Ascending aorta (tissue), 2 donors: ENCODE measurements at regions of chr12 and their contacts with region 1.

Region 1: DNA sequence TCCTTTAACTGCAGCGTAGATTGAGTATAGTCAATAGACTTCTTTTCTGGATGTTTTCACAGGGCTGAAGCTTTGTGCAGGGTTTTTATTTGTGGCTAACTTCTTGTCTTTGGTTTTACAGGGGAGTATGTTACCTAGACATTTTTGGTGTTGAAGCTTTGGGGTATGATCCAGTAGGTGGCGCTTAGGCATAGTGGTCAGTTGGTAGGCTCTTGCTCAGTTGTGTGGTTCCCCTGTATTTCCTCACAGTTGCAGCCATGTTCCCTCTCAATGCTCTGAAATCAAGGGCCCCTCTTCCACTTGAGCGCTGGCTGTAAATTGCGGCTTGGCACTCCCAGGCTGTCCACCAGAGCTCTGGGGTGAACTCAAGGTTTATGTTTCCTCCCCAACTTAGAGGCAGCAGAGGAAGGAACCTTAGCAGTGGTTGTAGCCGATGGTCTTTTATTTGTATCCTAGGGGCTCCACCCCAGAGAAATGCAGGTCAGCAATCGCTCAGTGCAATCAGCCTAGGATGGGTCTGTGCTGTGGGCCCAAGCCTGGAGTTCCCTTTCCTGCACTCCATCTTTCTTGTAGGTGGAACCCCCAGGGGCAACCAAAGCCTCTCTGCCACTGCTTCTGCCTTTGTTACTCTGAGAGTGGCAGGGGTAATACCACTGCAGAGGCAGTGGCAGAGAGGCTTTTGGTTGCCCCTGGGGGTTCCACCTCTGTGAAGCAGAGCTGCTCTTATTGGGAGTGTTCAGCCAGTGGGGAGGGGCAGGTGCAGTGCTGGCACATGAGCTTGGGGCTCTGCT is 55.1 kb downstream of the CMAS start:
- DNase-seq: no peak
- H3K4me3 ChIP-seq: no peak overlapping the region
- H3K27ac ChIP-seq: no peak overlapping the region
- H3K4me1 ChIP-seq: no peaks in the 10 kb centered on the region
- H3K27me3 ChIP-seq: no peaks in the 10 kb centered on the region
- CTCF ChIP-seq: peak; percentile 16 to 50 (median 36)

Region 2: GRCh38 chr12:20740972-20741371 is 1360.2 kb before region 1 on chr12:
- intact Hi-C with region 1: loop called (anchors 10 kb)
- DNase-seq: no peak
- H3K4me3 ChIP-seq: no peak overlapping the region
- H3K27ac ChIP-seq: no peak overlapping the region
- H3K4me1 ChIP-seq: no peaks in the 10 kb centered on the region
- H3K27me3 ChIP-seq: no peaks in the 10 kb centered on the region
- CTCF ChIP-seq: no peak

Region 3: GRCh38 chr12:21809100-21809499 is 292.1 kb before region 1 on chr12:
- intact Hi-C with region 1: no loop called
- DNase-seq: no peak
- H3K4me3 ChIP-seq: no peak overlapping the region
- H3K27ac ChIP-seq: no peak overlapping the region
- H3K4me1 ChIP-seq: no peaks in the 10 kb centered on the region
- H3K27me3 ChIP-seq: no peaks in the 10 kb centered on the region
- CTCF ChIP-seq: no peak

Region 4: DNA sequence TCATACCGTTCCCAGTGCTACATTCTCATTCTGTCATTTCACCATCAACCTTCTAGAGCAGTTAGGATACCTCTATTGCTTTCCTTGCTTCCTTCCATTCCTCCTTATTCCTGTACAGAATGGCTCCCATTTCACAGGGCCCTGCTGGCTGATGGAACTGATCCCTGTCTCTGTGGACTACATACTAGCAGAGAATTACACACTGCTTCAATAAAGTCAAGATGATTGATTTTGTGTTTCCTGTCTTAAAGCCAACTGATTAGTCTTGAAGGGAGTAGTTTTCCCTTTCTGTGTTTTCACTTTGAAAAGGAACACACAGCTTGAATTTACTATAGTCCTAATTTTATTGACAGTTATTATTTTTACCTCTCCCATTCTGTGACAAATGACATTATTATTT is 103.2 kb after region 1 on chr12:
- intact Hi-C with region 1: no loop called
- DNase-seq: no peak
- H3K4me3 ChIP-seq: no peak overlapping the region
- H3K27ac ChIP-seq: no peak overlapping the region
- H3K4me1 ChIP-seq: no peaks in the 10 kb centered on the region
- H3K27me3 ChIP-seq: no peaks in the 10 kb centered on the region
- CTCF ChIP-seq: no peak

Region 5: DNA sequence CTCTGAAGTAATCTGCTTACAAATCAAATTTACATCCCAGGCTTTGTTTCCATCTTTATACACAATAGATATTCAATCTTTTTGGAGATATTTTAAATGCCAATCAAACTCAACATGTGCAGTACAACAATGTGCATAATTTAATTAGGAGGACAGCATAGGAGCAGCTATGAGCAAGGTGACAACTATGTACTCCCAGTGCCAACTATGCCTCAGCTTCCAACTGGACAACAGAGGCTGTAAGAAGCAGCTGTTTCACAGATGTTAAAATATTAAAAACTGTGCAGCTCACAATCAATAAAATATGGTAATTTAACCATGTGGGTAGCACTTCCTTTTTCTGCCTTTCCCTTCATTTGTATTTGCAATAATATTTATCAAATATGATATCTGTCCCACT is 133.4 kb after region 1 on chr12:
- intact Hi-C with region 1: no loop called
- DNase-seq: no peak
- H3K4me3 ChIP-seq: no peak overlapping the region
- H3K27ac ChIP-seq: no peak overlapping the region
- H3K4me1 ChIP-seq: no peaks in the 10 kb centered on the region
- H3K27me3 ChIP-seq: no peaks in the 10 kb centered on the region
- CTCF ChIP-seq: no peak

Region 6: DNA sequence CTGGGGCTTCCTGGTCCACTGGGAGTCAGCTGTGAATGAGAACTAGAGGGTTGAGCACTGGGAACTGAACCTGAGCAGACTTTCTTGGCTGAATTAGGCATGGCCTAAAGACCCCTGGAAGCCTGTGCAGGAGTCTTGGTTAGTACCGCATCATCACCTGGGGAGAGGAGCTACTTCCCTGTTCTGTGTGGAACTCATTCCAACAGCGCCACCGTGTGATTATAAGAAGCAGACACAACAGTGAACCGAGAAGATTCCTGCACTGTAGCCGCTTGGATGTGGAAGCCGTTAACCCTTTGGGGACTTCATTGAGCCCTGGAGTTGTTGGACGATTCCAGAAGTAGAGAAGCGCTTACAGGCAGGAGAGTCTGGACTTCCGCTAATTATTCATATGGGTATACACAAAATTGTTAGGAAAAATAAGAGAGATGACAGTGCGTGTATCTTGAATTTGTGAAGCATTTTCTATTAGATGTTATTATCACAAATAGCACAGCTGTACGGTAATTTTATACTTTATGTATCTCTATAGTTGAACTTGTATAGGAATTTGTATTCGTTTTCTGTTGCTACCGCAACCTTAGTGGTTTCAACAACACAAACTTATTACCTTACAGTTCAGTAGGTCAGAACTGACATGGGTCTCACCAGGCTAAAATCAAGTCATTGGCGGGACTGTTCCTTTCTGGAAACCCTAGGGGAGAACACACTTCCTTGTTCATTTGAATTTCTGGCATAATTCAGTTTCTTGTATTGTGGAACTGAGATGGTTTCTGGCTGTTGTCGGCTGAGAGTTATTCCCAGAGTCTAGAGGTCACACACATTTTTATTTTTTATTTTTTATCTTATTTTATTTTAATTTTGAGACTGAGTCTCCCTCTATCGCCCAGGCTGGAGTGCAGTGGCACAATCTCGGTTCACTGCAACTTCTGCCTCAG is 342.5 kb after region 1 on chr12:
- intact Hi-C with region 1: loop called (anchors 5 kb)
- DNase-seq: peak in 1 of 2 donors; percentile 73
- H3K4me3 ChIP-seq: no peak overlapping the region
- H3K27ac ChIP-seq: no peak overlapping the region
- H3K4me1 ChIP-seq: no peaks in the 10 kb centered on the region
- H3K27me3 ChIP-seq: no peaks in the 10 kb centered on the region
- CTCF ChIP-seq: peak; percentile 53 to 82 (median 75)